CD8-positive, alpha-beta T cell (primary cell): ENCODE measurements at regions of chr5 and their contacts with region 1.

Region 1: DNA sequence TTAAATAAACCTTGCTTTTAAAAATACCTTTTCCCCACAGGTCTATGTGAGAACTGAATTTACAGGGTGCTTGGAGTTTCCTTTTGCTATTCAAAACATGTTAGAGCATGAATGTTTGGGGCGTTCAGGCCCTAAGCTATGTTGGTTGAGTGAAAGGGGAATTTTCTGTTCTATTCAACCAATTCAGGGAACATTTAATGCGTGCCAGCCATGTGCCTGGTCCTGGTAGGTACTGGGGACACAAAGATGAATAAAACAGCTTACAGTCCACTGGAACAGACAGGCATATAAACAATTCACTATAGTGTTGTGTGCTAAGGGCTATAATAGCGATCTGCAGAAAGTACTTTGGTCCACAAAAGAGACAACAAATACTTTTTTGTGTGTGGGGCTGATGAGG is 108.5 kb downstream of the ZSWIM6 start:
- DNase-seq: no peak
- ATAC-seq: no peak
- H3K4me3 ChIP-seq: no peak overlapping the region
- H3K4me3 Mint-ChIP-seq: no peak overlapping the region
- H3K27ac ChIP-seq: no peak overlapping the region
- H3K27ac Mint-ChIP-seq: no peak overlapping the region
- H3K4me1 ChIP-seq: no peaks in the 10 kb centered on the region
- H3K4me1 Mint-ChIP-seq: peaks cover 8% of the 10 kb centered on the region
- H3K27me3 ChIP-seq: no peaks in the 10 kb centered on the region
- H3K27me3 Mint-ChIP-seq: no peaks in the 10 kb centered on the region
- CTCF ChIP-seq: no peak

Region 2: DNA sequence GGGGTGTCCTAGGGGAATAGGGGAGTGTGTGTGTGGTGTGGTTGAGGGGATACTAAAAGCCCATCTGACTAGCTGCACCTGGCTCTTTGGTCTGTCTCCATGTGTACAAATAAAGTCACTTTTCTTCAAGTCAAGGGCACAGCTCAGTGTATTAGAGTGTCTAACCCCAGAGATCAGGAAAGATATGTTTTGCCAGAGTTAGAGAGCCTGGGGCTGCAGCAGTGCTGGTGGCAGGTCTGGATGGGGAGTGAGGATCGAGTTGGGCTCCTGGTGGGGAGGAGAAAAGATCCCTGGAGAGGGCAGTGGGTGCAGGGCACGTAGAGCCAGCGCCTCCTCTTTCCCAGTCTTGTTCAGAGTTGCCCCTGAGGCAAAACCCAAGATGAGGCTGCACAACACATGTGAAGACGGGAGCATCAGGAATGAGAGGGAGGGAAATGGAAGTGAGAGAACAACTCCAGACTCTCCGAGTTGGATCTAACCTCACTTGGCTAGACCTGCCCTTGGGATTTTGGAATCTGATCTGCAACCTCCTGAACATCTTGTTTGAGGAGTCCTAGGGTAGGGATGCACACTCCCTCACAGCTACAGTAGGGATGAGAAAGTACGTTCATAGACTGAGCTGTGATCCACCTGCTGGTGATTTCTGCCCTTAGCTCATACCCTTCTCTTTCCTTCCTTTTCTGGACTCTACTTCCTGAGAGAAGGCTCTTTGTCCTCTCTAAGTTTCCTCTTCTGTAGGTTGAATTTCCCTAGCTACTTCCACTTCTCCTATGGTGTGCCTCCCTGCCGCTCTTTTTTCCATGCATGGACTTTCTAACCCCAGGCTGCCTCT is 201.4 kb after region 1 on chr5:
- CTCF ChIA-PET with region 1: no interaction called
- POLR2A ChIA-PET with region 1: no interaction called
- intact Hi-C with region 1: loop called in 1 of 2 experiments (anchors 5 kb)
- DNase-seq: peak in 1 of 9 experiments; percentile 7
- ATAC-seq: no peak
- H3K4me3 ChIP-seq: no peak overlapping the region
- H3K4me3 Mint-ChIP-seq: no peak overlapping the region
- H3K27ac ChIP-seq: no peak overlapping the region
- H3K27ac Mint-ChIP-seq: no peak overlapping the region
- H3K4me1 ChIP-seq: no peaks in the 10 kb centered on the region
- H3K4me1 Mint-ChIP-seq: no peaks in the 10 kb centered on the region
- H3K27me3 ChIP-seq: peaks cover 0 to 2% of the 10 kb centered on the region in 2 experiments
- H3K27me3 Mint-ChIP-seq: peaks cover 2% of the 10 kb centered on the region
- CTCF ChIP-seq: no peak